SK-N-SH (cell line): ENCODE measurements at regions of chr12 and their contacts with region 1.

Region 1: GRCh38 chr12:109597795-109598427 is 24.3 kb downstream of the MVK start:
- DNase-seq: peak; percentile 94
- H3K4me3 ChIP-seq: peak overlapping the region; percentile 6 to 51; a peak in 1 of 4 replicates
- H3K27ac ChIP-seq: peak overlapping the region in 1 of 2 experiments; percentile 75; a peak in 2 of 4 replicates
- H3K4me1 ChIP-seq: peaks cover 0 to 29% of the 10 kb centered on the region in 2 experiments; a peak in 2 of 4 replicates
- H3K27me3 ChIP-seq: no peaks in the 10 kb centered on the region
- CTCF ChIP-seq: peak; percentile 96
- EP300 ChIP-seq: no peak
- RAD21 ChIP-seq: peak; percentile 91

Region 2: DNA sequence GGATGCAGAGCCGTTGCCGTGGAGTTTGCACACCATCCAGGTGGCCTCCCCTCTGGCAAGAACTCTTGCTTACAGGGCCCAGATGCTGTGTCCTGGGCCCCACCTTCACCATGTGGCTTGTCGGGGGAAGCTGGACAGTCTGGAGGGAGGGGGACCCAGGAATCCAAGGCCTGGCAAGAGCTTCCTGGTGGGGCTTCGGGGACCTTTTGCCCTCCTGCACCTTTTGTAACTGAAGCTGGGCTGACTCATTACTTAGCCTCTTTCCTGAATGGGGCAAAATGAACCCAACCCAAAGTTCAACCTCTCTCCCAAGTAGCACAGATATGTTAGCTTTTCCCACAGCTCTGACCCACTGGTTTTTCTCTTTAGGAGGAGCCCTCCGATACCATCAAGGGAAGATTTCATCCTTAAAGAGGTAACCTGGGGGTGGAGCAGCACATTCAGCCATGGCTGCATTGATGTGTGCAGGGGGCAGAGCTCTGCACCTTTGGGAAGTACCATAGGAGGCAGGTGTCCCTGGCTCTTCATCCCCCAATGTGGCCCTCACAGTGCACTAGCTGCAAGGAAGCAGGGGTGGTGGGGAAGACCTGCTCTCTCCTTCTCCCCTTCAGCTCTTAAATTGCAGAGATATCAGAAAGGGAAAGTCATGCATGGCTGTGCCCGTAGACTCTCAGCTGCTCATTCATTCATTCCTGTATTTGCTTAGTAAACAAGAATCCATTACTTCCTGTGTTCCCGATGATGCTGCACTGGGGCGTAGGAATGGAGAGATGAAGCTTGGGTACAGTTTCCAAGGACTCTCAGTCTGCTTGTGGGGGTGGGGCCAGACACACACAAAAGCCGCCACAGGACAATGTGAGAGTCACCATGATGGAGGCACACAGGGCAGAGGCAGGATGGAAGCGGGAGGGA is 11.3 kb before region 1 on chr12:
- CTCF ChIA-PET with region 1: interaction called, 25 read pairs
- POLR2A ChIA-PET with region 1: interaction called, 3 read pairs
- DNase-seq: no peak
- H3K4me3 ChIP-seq: no peak overlapping the region
- H3K27ac ChIP-seq: no peak overlapping the region
- H3K4me1 ChIP-seq: peaks cover 0 to 23% of the 10 kb centered on the region in 2 experiments; a peak in 2 of 4 replicates
- H3K27me3 ChIP-seq: no peaks in the 10 kb centered on the region
- CTCF ChIP-seq: no peak
- EP300 ChIP-seq: no peak
- RAD21 ChIP-seq: no peak

Region 3: DNA sequence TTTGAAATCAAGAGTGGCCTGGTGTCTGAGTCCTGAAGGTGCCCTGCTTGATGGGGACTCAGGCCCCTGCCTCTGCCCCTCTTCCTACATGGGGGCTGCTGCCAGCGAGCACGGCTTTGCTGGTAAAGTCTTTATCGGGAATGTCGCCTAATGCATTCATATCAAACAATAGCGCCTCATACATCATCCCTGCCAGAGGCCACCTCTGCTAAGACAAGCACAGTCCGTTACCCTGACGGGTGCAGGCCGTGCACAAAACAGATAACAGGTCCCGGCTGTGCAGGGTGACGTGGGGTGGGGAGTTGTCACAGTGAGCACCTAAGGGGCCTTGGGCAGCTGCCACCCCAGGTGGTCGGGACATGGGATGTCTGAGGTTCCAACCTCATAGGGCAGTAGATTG is 47.3 kb after region 1 on chr12:
- CTCF ChIA-PET with region 1: interaction called, 19 read pairs
- POLR2A ChIA-PET with region 1: interaction called, 14 read pairs
- DNase-seq: peak; percentile 70
- H3K4me3 ChIP-seq: no peak overlapping the region
- H3K27ac ChIP-seq: peak overlapping the region in 1 of 2 experiments; percentile 95; a peak in 2 of 4 replicates
- H3K4me1 ChIP-seq: peaks cover 0 to 55% of the 10 kb centered on the region in 2 experiments; a peak in 2 of 4 replicates
- H3K27me3 ChIP-seq: no peaks in the 10 kb centered on the region; the same call in 1 of the 2 replicates
- CTCF ChIP-seq: no peak
- EP300 ChIP-seq: peak in 1 of 2 experiments; percentile 62; a peak in 1 of 4 replicates
- RAD21 ChIP-seq: peak; percentile 6; the same call in 1 of the 2 replicates

Region 4: DNA sequence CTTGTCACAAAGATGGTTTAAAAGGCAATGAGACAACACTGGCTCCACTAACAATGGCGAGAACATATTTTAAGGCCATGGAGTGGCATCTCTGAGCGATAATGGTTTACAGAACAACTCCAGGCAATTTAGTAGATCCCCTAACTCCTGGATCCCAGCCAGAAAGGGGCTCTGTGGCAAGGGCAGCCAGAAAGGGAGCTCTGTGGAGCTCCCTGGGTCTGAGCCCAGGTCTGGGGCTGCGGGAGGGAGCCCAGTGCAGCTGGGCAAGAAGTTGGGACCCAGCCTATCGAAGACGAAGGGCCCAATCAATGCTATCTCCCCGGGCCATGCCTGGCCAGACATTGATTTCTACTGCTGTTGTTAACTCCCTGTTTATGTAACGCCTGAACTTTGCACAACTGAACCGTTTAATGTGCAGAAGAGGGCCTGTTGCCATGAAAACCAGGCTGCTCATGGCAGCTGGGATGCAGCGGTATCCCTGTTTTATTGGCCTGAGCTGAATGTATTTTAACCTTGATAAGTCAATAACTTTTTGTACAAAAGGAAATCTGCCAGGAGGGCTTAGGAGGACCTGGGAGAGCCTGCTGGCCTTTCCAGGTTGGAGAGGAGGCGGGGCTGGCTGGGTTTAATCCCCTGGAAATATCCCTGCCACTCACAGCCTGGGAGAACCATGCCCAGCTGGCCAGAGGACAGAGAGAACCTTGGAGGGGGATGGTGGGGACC is 109.0 kb after region 1 on chr12:
- CTCF ChIA-PET with region 1: interaction called, 27 read pairs
- POLR2A ChIA-PET with region 1: no interaction called
- DNase-seq: peak; percentile 80
- H3K4me3 ChIP-seq: no peak overlapping the region
- H3K27ac ChIP-seq: peak overlapping the region in 1 of 2 experiments; percentile 89; a peak in 2 of 4 replicates
- H3K4me1 ChIP-seq: peaks cover 0 to 38% of the 10 kb centered on the region in 2 experiments; a peak in 2 of 4 replicates
- H3K27me3 ChIP-seq: no peaks in the 10 kb centered on the region
- CTCF ChIP-seq: no peak
- EP300 ChIP-seq: peak in 1 of 2 experiments; percentile 54; a peak in 2 of 4 replicates
- RAD21 ChIP-seq: peak; percentile 21

Region 5: GRCh38 chr12:109739747-109740693 is 142.1 kb after region 1 on chr12:
- CTCF ChIA-PET with region 1: interaction called, 10 read pairs
- POLR2A ChIA-PET with region 1: no interaction called
- DNase-seq: peak; percentile 59
- H3K4me3 ChIP-seq: no peak overlapping the region
- H3K27ac ChIP-seq: peak overlapping the region in 1 of 2 experiments; percentile 66; a peak in 2 of 4 replicates
- H3K4me1 ChIP-seq: peaks cover 0 to 98% of the 10 kb centered on the region in 2 experiments; a peak in 2 of 4 replicates
- H3K27me3 ChIP-seq: no peaks in the 10 kb centered on the region
- CTCF ChIP-seq: peak; percentile 33; the same call in 1 of the 2 replicates
- EP300 ChIP-seq: peak in 1 of 2 experiments; percentile 52; a peak in 1 of 4 replicates
- RAD21 ChIP-seq: peak; percentile 41

Region 6: DNA sequence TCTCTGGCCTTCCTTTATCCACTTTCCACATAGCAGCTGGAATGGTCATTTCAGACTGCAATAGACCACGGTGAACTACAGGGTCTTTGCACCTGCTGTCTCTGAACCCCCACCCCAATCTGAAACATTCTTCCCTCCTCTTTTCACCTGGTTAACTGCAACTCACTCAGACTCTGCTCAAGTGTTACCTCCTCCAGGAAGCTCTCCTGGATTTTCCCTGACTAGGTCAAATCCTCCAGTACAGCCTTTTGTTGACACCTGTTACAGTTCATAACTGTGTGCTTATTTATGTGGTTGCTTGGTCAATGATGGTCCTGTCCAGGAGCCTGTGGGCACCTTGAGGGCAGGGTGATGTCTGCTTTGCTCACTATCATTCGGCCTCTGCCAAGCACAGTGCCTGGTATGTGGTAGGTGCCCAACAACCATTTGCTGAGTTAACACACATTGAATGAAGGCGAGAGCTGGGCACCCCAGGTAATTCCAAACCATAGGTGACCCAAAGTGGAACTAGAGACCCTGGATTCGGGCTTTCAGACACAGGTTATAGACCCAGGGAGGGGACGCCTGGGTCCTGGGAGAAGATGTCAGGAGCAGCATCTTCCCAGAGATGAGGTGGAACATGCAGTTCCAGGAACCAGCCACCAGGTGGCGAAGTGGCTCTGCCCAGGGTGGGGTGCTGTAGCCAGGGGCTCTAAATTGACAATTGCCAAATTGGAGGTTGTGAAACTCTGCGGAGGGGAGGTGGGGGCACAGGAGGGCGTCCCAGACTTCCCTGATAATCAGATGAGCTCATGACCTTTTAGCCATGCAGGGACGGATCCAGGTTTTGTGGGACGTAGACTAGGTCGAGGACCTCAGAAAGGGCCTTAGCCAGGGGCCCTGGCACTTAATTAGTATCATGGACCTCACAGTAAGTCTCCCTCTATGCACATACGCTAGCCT is 207.2 kb after region 1 on chr12:
- CTCF ChIA-PET with region 1: interaction called, 15 read pairs
- POLR2A ChIA-PET with region 1: no interaction called
- DNase-seq: peak; percentile 89
- H3K4me3 ChIP-seq: no peak overlapping the region; a peak in 1 of 4 replicates
- H3K27ac ChIP-seq: no peak overlapping the region
- H3K4me1 ChIP-seq: no peaks in the 10 kb centered on the region
- H3K27me3 ChIP-seq: no peaks in the 10 kb centered on the region
- CTCF ChIP-seq: peak; percentile 93
- EP300 ChIP-seq: no peak
- RAD21 ChIP-seq: peak; percentile 77